ENCODE measurements at regions of chr7 and their contacts with region 1.

Region 1: DNA sequence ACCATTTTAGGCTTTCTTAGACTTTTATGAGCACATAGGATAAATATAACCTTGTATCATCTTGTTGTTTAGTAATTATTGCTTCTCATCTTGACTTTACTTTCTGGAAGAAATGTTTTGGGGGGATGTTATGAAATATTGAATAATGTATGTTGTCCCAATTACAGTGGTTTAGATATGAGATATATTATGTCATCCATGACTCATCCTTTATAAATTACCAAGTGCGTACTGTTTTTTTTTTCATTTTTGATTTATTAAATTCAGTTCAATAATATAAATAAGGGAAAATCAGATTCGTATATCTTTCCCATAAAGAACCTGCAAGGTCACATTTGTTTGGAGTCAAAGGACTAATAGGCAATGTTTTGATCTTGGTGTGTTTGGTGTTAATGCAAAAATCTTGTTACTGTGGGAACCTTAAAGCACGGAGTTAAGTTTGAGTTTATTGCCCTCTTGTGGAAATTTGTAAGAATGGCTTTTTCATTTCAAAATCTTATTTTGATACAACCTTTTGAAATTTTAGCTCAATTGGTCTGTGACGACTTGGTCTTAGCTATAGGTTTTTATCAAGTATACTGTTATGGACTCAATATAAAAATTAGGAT is 108.6 kb downstream of the SRI start:
- DNase-seq: no peak
- H3K4me3 Mint-ChIP-seq: no peak overlapping the region
- H3K27ac Mint-ChIP-seq: no peak overlapping the region
- H3K4me1 Mint-ChIP-seq: peaks cover 6% of the 10 kb centered on the region
- H3K27me3 Mint-ChIP-seq: no peaks in the 10 kb centered on the region

Region 2: GRCh38 chr7:87312215-87312865 is 798.9 kb before region 1 on chr7:
- CTCF ChIA-PET with region 1: no interaction called
- POLR2A ChIA-PET with region 1: no interaction called
- intact Hi-C with region 1: loop called (anchors 10 kb)
- DNase-seq: peak; percentile 52
- H3K4me3 Mint-ChIP-seq: no peak overlapping the region
- H3K27ac Mint-ChIP-seq: no peak overlapping the region
- H3K4me1 Mint-ChIP-seq: no peaks in the 10 kb centered on the region
- H3K27me3 Mint-ChIP-seq: no peaks in the 10 kb centered on the region

Region 3: GRCh38 chr7:87506246-87507180 is 604.7 kb before region 1 on chr7:
- CTCF ChIA-PET with region 1: interaction called, 7 read pairs
- POLR2A ChIA-PET with region 1: no interaction called
- intact Hi-C with region 1: loop called (anchors 2 kb)
- DNase-seq: no peak
- H3K4me3 Mint-ChIP-seq: no peak overlapping the region
- H3K27ac Mint-ChIP-seq: no peak overlapping the region
- H3K4me1 Mint-ChIP-seq: no peaks in the 10 kb centered on the region
- H3K27me3 Mint-ChIP-seq: no peaks in the 10 kb centered on the region

Region 4: DNA sequence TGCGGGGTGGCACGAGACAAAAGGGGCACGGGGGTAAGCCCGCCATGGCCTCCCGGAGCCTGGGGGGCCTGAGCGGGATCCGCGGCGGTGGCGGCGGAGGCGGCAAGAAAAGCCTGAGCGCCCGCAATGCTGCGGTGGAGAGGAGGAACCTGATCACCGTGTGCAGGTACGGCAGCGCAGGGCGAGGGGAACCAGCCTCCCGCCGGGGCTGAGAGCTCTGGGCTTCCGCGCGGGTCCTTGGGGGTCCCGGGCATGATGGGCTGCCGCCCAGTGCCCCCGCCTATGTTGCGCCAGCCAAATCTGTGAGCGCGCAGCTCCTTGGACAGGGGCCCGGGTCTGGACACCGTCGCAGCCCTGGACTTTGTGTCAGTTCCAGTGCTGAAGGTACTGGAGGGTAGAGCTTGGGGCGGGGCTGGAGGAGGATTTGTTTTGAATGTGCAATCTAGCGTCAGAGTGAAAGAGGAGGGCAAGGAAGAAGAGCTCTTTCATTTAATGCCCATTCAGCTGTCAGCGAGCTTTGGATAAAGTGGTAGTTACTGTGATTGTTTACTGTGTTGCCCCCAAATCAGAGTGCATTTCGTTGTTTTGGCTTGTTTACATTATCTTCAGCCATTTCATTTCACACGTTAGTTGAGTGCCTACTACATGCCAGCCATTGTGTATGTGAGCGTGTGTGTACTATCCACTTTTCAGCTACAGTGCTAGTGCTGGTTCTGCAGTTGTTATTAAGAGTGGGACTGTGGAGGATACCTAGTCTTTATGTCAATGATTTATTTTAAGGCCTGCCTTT is 482.3 kb before region 1 on chr7:
- CTCF ChIA-PET with region 1: no interaction called
- POLR2A ChIA-PET with region 1: no interaction called
- intact Hi-C with region 1: loop called (anchors 10 kb)
- DNase-seq: peak; percentile 35
- H3K4me3 Mint-ChIP-seq: peak overlapping the region; percentile 74
- H3K27ac Mint-ChIP-seq: no peak overlapping the region
- H3K4me1 Mint-ChIP-seq: peaks cover 9% of the 10 kb centered on the region
- H3K27me3 Mint-ChIP-seq: peaks cover 14% of the 10 kb centered on the region

Region 5: GRCh38 chr7:87797798-87798403 is 313.3 kb before region 1 on chr7:
- CTCF ChIA-PET with region 1: interaction called, 13 read pairs
- POLR2A ChIA-PET with region 1: no interaction called
- intact Hi-C with region 1: loop called (anchors 1 kb)
- DNase-seq: no peak
- H3K4me3 Mint-ChIP-seq: no peak overlapping the region
- H3K27ac Mint-ChIP-seq: no peak overlapping the region
- H3K4me1 Mint-ChIP-seq: no peaks in the 10 kb centered on the region
- H3K27me3 Mint-ChIP-seq: peaks cover 8% of the 10 kb centered on the region

Region 6: GRCh38 chr7:87886875-87887274 is 224.4 kb before region 1 on chr7:
- CTCF ChIA-PET with region 1: no interaction called
- POLR2A ChIA-PET with region 1: no interaction called
- intact Hi-C with region 1: loop called (anchors 10 kb)
- DNase-seq: no peak
- H3K4me3 Mint-ChIP-seq: no peak overlapping the region
- H3K27ac Mint-ChIP-seq: no peak overlapping the region
- H3K4me1 Mint-ChIP-seq: peaks cover 4% of the 10 kb centered on the region
- H3K27me3 Mint-ChIP-seq: no peaks in the 10 kb centered on the region

Region 7: GRCh38 chr7:88233828-88234227 is 122.6 kb after region 1 on chr7:
- CTCF ChIA-PET with region 1: no interaction called
- POLR2A ChIA-PET with region 1: no interaction called
- intact Hi-C with region 1: no loop called
- DNase-seq: no peak
- H3K4me3 Mint-ChIP-seq: no peak overlapping the region
- H3K27ac Mint-ChIP-seq: no peak overlapping the region
- H3K4me1 Mint-ChIP-seq: peaks cover 3% of the 10 kb centered on the region
- H3K27me3 Mint-ChIP-seq: peaks cover 18% of the 10 kb centered on the region